ENCODE measurements at regions of chrX and their contacts with region 1.

Region 1: GRCh38 chrX:48539345-48540027 is at the start of gene TBC1D25:
- DNase-seq: peak; percentile 97
- H3K4me3 Mint-ChIP-seq: peak within 1 kb of the TSS; percentile 74
- H3K27ac Mint-ChIP-seq: peak within 1 kb of the TSS; percentile 10
- H3K4me1 Mint-ChIP-seq: peaks cover 17% of the 10 kb centered on the region
- H3K27me3 Mint-ChIP-seq: no peaks in the 10 kb centered on the region
- CTCF ChIP-seq: no peak
- total RNA-seq, gene TBC1D25: 18.2 and 19.4 TPM in 2 replicates

Region 2: DNA sequence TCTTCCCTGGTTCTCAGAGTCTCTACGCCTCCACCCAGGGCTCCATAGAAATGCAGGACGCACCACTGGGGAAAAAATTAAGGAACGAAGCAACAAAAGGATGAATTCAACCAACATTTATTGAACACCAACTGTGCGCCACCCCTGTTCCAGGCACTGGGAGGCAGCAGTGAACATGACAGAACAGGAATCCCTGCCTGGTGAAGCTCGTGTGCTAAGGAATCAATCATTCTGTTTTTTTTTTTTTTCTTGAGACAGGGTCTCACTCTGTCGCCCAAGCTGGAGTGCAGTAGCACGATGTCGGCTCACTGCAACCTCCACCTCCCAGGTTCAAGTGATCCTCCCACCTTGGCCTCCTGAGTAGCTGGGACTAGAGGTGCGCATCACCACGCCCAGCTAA is 65.4 kb before region 1 on chrX:
- CTCF ChIA-PET with region 1: interaction called, 10 read pairs
- intact Hi-C with region 1: no loop called
- DNase-seq: peak; percentile 47
- H3K4me3 Mint-ChIP-seq: no peak overlapping the region
- H3K27ac Mint-ChIP-seq: no peak overlapping the region
- H3K4me1 Mint-ChIP-seq: peaks cover 28% of the 10 kb centered on the region
- H3K27me3 Mint-ChIP-seq: peaks cover 13% of the 10 kb centered on the region
- CTCF ChIP-seq: peak; percentile 13

Region 3: DNA sequence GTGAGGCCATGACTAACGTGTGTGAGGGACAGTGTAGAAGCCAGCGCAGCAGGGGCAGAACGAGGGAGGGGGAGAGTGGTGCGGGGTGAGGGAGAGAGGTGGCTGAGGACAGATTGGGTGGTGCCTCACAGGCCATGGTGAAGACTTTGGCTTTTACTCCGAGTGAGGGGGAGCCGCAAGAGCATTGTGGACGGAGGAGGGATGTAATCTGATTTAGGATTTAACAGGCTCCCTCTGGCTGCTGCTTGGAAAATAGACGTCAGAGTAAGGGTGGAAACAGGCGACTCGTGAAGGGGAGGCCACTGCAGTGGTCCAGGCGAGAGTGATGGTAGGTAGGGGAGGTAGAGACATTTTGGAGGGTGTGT is 743.1 kb after region 1 on chrX:
- CTCF ChIA-PET with region 1: no interaction called
- intact Hi-C with region 1: no loop called
- DNase-seq: no peak
- H3K4me3 Mint-ChIP-seq: no peak overlapping the region
- H3K27ac Mint-ChIP-seq: no peak overlapping the region
- H3K4me1 Mint-ChIP-seq: no peaks in the 10 kb centered on the region
- H3K27me3 Mint-ChIP-seq: no peaks in the 10 kb centered on the region
- CTCF ChIP-seq: no peak